ENCODE measurements at regions of chr11 and their contacts with region 1.

Region 1: GRCh38 chr11:76782526-76783293 is 446 bp upstream of the TSKU start:
- DNase-seq: peak in 1 of 2 experiments; percentile 65
- H3K4me3 ChIP-seq: peak overlapping the region; percentile 48 to 89 (median 74)
- H3K27ac ChIP-seq: peak overlapping the region; percentile 96; the same call in 1 of the 2 replicates
- H3K4me1 ChIP-seq: peaks cover 15 to 28% (median 21%) of the 10 kb centered on the region in 4 experiments
- H3K27me3 ChIP-seq: no peaks in the 10 kb centered on the region
- CTCF ChIP-seq: no peak
- EP300 ChIP-seq: peak in 1 of 2 experiments; percentile 57; a peak in 1 of 3 replicates
- POLR2A ChIP-seq: peak in 1 of 2 experiments; percentile 61; a peak in 2 of 3 replicates
- RAD21 ChIP-seq: peak in 1 of 2 experiments; percentile 16; a peak in 1 of 4 replicates

Region 2: GRCh38 chr11:76680518-76681425 is 101.9 kb before region 1 on chr11:
- CTCF ChIA-PET with region 1: no interaction called
- POLR2A ChIA-PET with region 1: no interaction called
- DNase-seq: peak; percentile 49 to 89
- H3K4me3 ChIP-seq: no peak overlapping the region
- H3K27ac ChIP-seq: no peak overlapping the region
- H3K4me1 ChIP-seq: peaks cover 0 to 2% (median 2%) of the 10 kb centered on the region in 4 experiments; a peak in 6 of 7 replicates
- H3K27me3 ChIP-seq: no peaks in the 10 kb centered on the region; a peak in 2 of 7 replicates
- CTCF ChIP-seq: peak; percentile 73 to 93 (median 84)
- EP300 ChIP-seq: no peak
- POLR2A ChIP-seq: no peak
- RAD21 ChIP-seq: peak; percentile 94 to 98

Region 3: GRCh38 chr11:76770642-76771445 is 11.9 kb before region 1 on chr11:
- CTCF ChIA-PET with region 1: interaction called, 4 read pairs
- POLR2A ChIA-PET with region 1: interaction called, 23 read pairs
- DNase-seq: no peak
- H3K4me3 ChIP-seq: no peak overlapping the region
- H3K27ac ChIP-seq: no peak overlapping the region
- H3K4me1 ChIP-seq: peaks cover 6 to 28% (median 19%) of the 10 kb centered on the region in 4 experiments
- H3K27me3 ChIP-seq: no peaks in the 10 kb centered on the region
- CTCF ChIP-seq: no peak
- EP300 ChIP-seq: no peak
- POLR2A ChIP-seq: no peak
- RAD21 ChIP-seq: no peak

Measured in H1 (cell line).